ENCODE measurements at regions of chr1 and their contacts with region 1.

Region 1: GRCh38 chr1:167066333-167067122 is 23.6 kb downstream of the GPA33 start:
- DNase-seq: peak; percentile 85 to 89 (median 86)
- ATAC-seq: peak; percentile 82
- H3K4me3 ChIP-seq: no peak overlapping the region
- H3K4me1 ChIP-seq: peaks cover 17% of the 10 kb centered on the region
- CTCF ChIP-seq: peak; percentile 91

Region 2: DNA sequence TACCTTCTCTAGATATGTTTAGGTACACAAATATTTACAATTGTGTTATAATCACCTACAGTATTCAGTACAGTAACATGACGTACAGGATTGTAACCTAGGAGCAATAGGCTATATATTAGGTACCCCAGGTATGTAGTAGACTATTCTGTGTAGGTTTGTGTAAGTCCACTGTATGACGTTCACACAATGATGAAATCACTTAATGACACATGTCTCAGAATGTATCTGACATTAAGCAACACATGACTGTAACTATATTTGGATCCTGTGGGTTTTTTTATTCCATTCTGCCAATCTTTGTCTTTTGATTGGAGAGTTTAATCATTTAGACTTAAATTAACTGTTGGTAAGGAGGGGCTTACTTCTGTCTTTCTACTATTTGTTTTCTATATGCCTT is 79.4 kb after region 1 on chr1:
- intact Hi-C with region 1: no loop called
- DNase-seq: no peak
- ATAC-seq: no peak
- H3K4me3 ChIP-seq: no peak overlapping the region
- H3K4me1 ChIP-seq: no peaks in the 10 kb centered on the region
- CTCF ChIP-seq: no peak

Region 3: GRCh38 chr1:167173516-167174184 is 107.1 kb after region 1 on chr1:
- intact Hi-C with region 1: no loop called
- DNase-seq: no peak
- ATAC-seq: no peak
- H3K4me3 ChIP-seq: no peak overlapping the region
- H3K4me1 ChIP-seq: peaks cover 3% of the 10 kb centered on the region
- CTCF ChIP-seq: no peak

Region 4: DNA sequence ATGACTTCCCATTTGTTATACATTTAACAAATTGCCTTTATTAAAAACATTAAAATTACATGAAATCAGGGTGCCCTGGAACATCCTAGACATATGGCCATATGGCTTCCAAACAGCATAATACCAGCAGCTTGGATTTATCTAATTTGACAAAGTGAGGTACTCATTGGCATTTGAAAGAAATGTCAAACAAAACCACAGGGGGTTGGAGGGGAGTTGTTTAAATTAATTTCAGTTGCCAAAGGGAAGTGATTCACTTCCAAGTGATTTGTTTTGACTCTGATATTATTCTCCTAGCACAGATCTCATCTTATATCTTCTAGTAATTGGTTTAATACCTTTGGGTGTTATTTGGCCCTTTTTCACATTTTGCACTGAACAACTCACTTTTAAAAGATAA is 129.6 kb after region 1 on chr1:
- intact Hi-C with region 1: no loop called
- DNase-seq: no peak
- ATAC-seq: no peak
- H3K4me3 ChIP-seq: no peak overlapping the region
- H3K4me1 ChIP-seq: no peaks in the 10 kb centered on the region
- CTCF ChIP-seq: no peak

Region 5: GRCh38 chr1:167219646-167220536 is 153.4 kb after region 1 on chr1:
- intact Hi-C with region 1: loop called in 1 of 2 experiments (anchors 10 kb)
- DNase-seq: peak; percentile 93 to 98 (median 95)
- ATAC-seq: peak; percentile 70
- H3K4me3 ChIP-seq: peak overlapping the region; percentile 50
- H3K4me1 ChIP-seq: peaks cover 18% of the 10 kb centered on the region
- CTCF ChIP-seq: no peak

Region 6: GRCh38 chr1:167442124-167442848 is 375.8 kb after region 1 on chr1:
- intact Hi-C with region 1: loop called in 1 of 2 experiments (anchors 5 kb)
- DNase-seq: peak; percentile 95 to 98 (median 98)
- ATAC-seq: peak; percentile 99
- H3K4me3 ChIP-seq: no peak overlapping the region
- H3K4me1 ChIP-seq: peaks cover 18% of the 10 kb centered on the region
- CTCF ChIP-seq: peak; percentile 63

Region 7: DNA sequence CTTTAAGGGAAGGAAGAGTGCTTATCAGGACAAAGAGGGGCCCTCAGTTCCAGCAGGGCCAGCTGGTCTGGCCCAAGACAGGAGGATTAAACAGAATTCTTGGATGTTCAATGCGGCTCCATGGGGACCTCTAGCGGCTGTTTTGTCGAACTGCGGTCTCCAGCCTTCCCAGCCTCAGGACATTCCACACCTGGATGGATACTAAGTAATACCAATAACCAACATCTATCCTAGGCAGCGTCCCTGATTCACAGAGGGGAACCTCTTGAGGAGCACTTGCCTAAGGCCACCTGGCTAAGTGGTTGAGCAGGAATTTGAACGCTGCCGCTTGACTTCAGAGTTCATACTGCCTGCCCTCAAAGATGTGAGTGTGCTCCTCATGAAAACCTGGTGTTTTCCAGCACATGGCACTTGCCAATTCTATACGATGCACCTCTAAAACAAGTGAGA is 467.3 kb after region 1 on chr1:
- intact Hi-C with region 1: loop called (anchors 5 to 10 kb)
- DNase-seq: peak in 2 of 3 donors; percentile 76 to 77
- ATAC-seq: peak; percentile 93
- H3K4me3 ChIP-seq: no peak overlapping the region
- H3K4me1 ChIP-seq: no peaks in the 10 kb centered on the region
- CTCF ChIP-seq: peak; percentile 84

Measured in mucosa of descending colon (tissue), 3 donors.